ENCODE measurements at regions of chr9 and their contacts with region 1.

Region 1: DNA sequence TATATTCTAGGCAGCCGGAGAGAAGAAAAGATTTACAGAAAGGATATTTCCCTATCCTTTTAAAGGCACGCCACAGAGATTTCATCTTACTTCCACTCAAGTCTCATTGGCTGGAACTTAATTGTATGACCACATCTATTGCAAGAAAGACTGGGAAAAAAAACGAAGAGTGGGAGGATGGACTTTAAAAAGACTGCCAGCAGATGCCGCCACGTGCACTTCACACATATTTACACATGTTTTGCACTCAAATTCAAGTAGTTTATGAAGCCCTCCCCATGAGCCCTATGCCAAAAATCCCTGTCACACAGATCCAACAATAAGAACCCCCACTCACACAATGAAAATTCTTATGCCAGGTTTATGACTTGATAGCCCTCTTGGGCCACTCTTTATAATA is 138.5 kb upstream of the TYRP1 start:
- DNase-seq: no peak
- ATAC-seq: no peak
- H3K4me3 ChIP-seq: no peak overlapping the region
- H3K4me3 Mint-ChIP-seq: no peak overlapping the region
- H3K27ac ChIP-seq: no peak overlapping the region
- H3K27ac Mint-ChIP-seq: no peak overlapping the region
- H3K4me1 ChIP-seq: no peaks in the 10 kb centered on the region
- H3K4me1 Mint-ChIP-seq: no peaks in the 10 kb centered on the region
- H3K27me3 ChIP-seq: no peaks in the 10 kb centered on the region
- H3K27me3 Mint-ChIP-seq: no peaks in the 10 kb centered on the region

Region 2: DNA sequence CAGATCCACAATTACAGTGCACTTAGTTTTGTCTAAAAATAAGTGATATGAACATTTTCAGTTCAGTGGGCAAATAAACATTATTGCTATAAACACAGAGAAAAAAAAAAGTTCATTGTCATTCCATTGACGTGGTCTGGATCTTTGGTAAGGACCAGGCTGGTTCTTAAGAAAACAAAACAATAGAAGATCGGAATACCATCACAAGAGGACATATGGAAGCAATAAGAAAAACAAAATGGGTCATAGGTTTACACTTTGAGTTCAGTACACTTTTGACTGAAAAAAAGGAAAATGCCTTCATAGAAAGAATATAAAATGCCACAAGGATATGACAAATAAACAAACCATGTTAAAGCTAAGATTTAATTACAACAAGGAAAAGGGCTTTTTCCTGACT is 150.9 kb before region 1 on chr9:
- CTCF ChIA-PET with region 1: no interaction called
- POLR2A ChIA-PET with region 1: no interaction called
- intact Hi-C with region 1: no loop called
- DNase-seq: no peak
- ATAC-seq: no peak
- H3K4me3 ChIP-seq: no peak overlapping the region
- H3K4me3 Mint-ChIP-seq: no peak overlapping the region
- H3K27ac ChIP-seq: no peak overlapping the region
- H3K27ac Mint-ChIP-seq: no peak overlapping the region
- H3K4me1 ChIP-seq: no peaks in the 10 kb centered on the region
- H3K4me1 Mint-ChIP-seq: no peaks in the 10 kb centered on the region
- H3K27me3 ChIP-seq: no peaks in the 10 kb centered on the region
- H3K27me3 Mint-ChIP-seq: no peaks in the 10 kb centered on the region

Region 3: DNA sequence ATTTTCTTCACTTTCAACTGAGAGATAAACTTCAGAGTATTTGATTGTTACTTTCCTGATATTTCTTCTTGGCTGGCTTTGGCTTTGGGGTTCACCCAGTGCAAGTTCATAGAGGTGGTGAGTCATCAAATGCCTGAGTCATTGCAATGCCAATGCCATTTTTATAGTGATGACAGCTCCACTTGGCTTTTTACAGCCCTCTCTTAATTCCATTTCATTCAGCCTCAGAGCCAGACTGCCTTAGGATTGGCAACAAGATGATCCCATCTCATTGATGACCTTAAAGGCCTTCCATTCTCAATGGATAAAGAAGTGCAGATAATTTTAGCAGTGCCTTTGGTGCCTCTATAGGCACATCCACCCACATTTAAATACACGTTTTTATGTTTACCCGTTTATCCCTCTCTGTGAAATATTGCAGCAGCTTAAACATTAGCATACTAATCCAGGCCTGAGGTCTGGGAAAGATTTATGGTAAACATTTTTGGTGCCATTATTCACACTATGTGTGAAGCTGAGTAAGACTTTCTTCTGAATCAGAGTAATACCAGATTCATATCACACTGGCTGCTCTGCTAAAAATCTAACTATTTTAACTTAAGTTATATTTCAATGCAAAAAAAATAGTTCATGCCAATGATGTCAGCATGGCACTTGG is 49.7 kb after region 1 on chr9:
- CTCF ChIA-PET with region 1: no interaction called
- POLR2A ChIA-PET with region 1: no interaction called
- intact Hi-C with region 1: loop called in 1 of 2 experiments (anchors 5 kb)
- DNase-seq: no peak
- ATAC-seq: no peak
- H3K4me3 ChIP-seq: no peak overlapping the region
- H3K4me3 Mint-ChIP-seq: no peak overlapping the region
- H3K27ac ChIP-seq: no peak overlapping the region
- H3K27ac Mint-ChIP-seq: no peak overlapping the region
- H3K4me1 ChIP-seq: no peaks in the 10 kb centered on the region
- H3K4me1 Mint-ChIP-seq: no peaks in the 10 kb centered on the region
- H3K27me3 ChIP-seq: no peaks in the 10 kb centered on the region
- H3K27me3 Mint-ChIP-seq: no peaks in the 10 kb centered on the region

Measured in naive thymus-derived CD4-positive, alpha-beta T cell (primary cell).